HCT116 (cell line): ENCODE measurements at regions of chr6 and their contacts with region 1.

Region 1: DNA sequence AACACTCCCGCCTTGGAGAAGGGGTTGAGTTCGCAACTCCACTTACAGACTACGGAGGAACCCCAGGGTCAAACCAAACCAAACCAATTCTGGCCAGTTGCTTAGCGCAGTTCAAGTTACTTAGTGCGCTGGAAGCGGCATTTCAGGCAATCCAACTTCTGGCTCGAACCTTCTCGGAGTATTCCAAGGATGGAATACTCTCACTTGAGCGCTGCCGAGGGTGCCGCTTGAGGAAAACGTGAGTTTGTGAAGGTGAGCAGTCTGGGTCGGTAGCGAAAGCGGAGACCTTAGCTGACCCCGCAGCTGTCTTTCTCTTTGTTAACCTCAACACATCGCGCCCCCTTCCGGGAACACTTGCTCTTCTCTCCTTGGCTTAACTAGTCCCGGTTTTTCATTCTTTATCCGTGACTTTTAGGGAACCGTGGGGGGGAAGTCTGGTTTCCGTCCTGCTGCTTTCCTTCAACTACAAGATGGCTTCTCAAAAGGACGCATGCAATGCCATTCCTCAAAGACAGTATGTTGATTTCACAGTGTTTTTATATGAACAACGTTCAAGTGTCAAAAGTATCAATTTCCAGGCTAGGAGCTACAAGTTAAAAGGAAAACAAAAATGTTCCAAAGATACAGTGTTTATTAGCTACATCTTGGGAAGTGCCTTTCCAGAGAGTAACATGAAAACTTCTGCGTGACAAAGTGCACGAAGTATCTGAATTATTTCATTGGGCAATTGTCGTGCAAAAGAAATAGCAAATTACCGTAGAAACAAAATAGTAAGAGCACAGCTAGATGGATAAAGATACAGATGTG is 742 bp upstream of the PNISR start:
- DNase-seq: peak; percentile 86
- ATAC-seq: peak; percentile 71
- H3K4me3 ChIP-seq: peak overlapping the region; percentile 95 to 99
- H3K27ac ChIP-seq: peak overlapping the region; percentile 86
- H3K4me1 ChIP-seq: peaks cover 14 to 26% of the 10 kb centered on the region in 2 experiments; a peak in 3 of 4 replicates
- H3K27me3 ChIP-seq: no peaks in the 10 kb centered on the region
- CTCF ChIP-seq: peak; percentile 47 to 56 (median 49)
- POLR2A ChIP-seq: peak; percentile 49
- RAD21 ChIP-seq: peak; percentile 58

Region 2: GRCh38 chr6:99393698-99394531 is 31.9 kb before region 1 on chr6 and contains the start of gene COQ3:
- CTCF ChIA-PET with region 1: no interaction called
- POLR2A ChIA-PET with region 1: interaction called, 5 read pairs
- RAD21 ChIA-PET with region 1: no interaction called
- intact Hi-C with region 1: loop called (anchors 5 kb)
- DNase-seq: peak; percentile 57
- ATAC-seq: peak; percentile 92
- H3K4me3 ChIP-seq: peak within 1 kb of the TSS; percentile 76 to 91
- H3K27ac ChIP-seq: peak within 1 kb of the TSS; percentile 77
- H3K4me1 ChIP-seq: peaks cover 7 to 12% of the 10 kb centered on the region in 2 experiments; a peak in 3 of 4 replicates
- H3K27me3 ChIP-seq: no peaks in the 10 kb centered on the region
- CTCF ChIP-seq: no peak
- POLR2A ChIP-seq: peak; percentile 72
- RAD21 ChIP-seq: no peak
- total RNA-seq, gene COQ3: 19.0 TPM

Region 3: DNA sequence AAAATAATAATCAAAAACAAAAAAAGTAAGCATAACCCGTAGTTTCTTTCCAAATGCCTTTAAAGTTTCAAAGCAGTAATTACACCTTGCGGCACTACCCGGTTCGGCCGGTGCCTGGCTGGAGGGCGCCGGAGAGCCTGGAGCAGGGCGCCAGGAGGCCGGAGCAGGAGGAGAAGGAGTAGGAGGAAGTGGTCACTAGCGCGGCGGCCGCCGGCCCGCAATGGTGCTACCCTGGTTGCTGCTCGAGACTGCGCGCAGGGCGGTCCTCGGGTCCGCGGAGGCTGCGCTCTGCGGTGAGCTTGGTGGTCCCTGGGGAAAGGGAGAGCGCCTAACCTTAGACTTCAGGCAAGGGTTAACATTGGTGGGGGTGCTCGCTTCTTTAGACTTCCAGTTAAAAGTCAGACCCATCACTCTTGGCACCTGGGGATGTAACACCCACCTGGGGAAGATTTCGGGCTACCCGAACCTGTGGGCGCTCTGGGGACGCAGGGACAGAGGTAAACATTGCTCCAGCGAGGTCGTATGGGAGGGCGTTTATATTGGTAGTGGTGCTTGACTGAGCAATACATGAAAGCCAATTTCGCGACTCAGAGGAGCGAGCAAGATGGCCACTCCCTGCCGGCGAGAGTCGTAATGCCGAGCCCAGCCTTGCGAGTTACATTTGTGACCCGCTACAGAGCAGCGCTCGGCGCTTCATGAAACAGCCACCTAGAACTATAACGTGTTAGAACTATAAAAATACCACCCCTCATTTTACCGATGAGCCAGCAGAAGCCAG is 95.2 kb after region 1 on chr6:
- CTCF ChIA-PET with region 1: no interaction called
- POLR2A ChIA-PET with region 1: no interaction called
- RAD21 ChIA-PET with region 1: no interaction called
- intact Hi-C with region 1: loop called (anchors 5 kb)
- DNase-seq: peak; percentile 61
- ATAC-seq: peak; percentile 89
- H3K4me3 ChIP-seq: peak overlapping the region; percentile 76 to 83
- H3K27ac ChIP-seq: peak overlapping the region; percentile 93
- H3K4me1 ChIP-seq: peaks cover 18 to 26% of the 10 kb centered on the region in 2 experiments; a peak in 3 of 4 replicates
- H3K27me3 ChIP-seq: no peaks in the 10 kb centered on the region
- CTCF ChIP-seq: peak; percentile 31 to 79 (median 77); a peak in 5 of 6 replicates
- POLR2A ChIP-seq: peak; percentile 64
- RAD21 ChIP-seq: peak; percentile 48; the same call in 1 of the 2 replicates

Region 4: GRCh38 chr6:99568103-99568933 is 142.5 kb after region 1 on chr6 and contains the start of gene CCNC:
- CTCF ChIA-PET with region 1: no interaction called
- POLR2A ChIA-PET with region 1: interaction called, 3 read pairs
- RAD21 ChIA-PET with region 1: no interaction called
- intact Hi-C with region 1: loop called (anchors 5 kb)
- DNase-seq: peak; percentile 95
- ATAC-seq: peak; percentile 97
- H3K4me3 ChIP-seq: peak within 1 kb of the TSS; percentile 94 to 97
- H3K27ac ChIP-seq: peak within 1 kb of the TSS; percentile 86
- H3K4me1 ChIP-seq: peaks cover 0 to 15% of the 10 kb centered on the region in 2 experiments; a peak in 3 of 4 replicates
- H3K27me3 ChIP-seq: no peaks in the 10 kb centered on the region
- CTCF ChIP-seq: no peak
- POLR2A ChIP-seq: peak; percentile 85
- RAD21 ChIP-seq: no peak
- total RNA-seq, gene CCNC: 78.5 TPM